Right cardiac atrium (tissue), 5 donors: ENCODE measurements at regions of chr5 and their contacts with region 1.

Region 1: DNA sequence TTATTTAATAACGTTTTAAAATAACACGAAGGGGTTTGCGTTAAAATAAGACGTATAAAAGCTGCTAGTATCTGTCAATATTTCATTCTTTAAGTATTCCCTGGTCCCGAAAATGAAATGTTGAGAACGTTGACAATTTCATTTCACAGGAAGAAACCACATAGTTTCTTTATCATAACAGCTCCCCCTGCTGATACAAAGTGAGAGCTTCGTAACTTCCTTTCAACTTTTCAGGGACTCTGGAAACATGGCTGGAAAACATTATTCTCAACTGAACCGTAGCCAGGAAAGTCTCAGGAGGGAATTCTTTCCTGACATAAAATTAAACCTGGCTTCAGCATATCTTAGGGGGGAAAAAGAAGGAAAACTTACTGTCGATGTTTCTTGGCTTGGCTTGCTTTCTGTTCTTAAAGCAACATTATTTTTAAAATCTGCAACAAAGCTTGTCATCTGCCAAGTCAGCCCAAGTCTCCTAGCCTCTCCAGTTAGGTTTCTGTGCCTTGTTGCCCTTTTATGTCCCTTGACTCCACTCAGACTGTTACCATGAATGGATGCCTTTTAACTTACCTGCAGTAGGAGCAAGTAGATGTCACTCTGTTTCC is 122.9 kb upstream of the DAB2 start:
- DNase-seq: peak in 1 of 3 donors; percentile 23
- ATAC-seq: peak; percentile 72 to 80
- H3K4me3 ChIP-seq: no peak overlapping the region
- H3K27ac ChIP-seq: no peak overlapping the region
- H3K4me1 ChIP-seq: peaks cover 1% of the 10 kb centered on the region
- H3K27me3 ChIP-seq: no peaks in the 10 kb centered on the region

Region 2: GRCh38 chr5:39217365-39218281 is 330.0 kb before region 1 on chr5:
- intact Hi-C with region 1: loop called in 1 of 4 experiments (anchors 10 kb)
- DNase-seq: peak; percentile 71 to 88 (median 72)
- ATAC-seq: peak; percentile 80 to 85
- H3K4me3 ChIP-seq: no peak overlapping the region
- H3K27ac ChIP-seq: no peak overlapping the region
- H3K4me1 ChIP-seq: no peaks in the 10 kb centered on the region
- H3K27me3 ChIP-seq: no peaks in the 10 kb centered on the region

Region 3: DNA sequence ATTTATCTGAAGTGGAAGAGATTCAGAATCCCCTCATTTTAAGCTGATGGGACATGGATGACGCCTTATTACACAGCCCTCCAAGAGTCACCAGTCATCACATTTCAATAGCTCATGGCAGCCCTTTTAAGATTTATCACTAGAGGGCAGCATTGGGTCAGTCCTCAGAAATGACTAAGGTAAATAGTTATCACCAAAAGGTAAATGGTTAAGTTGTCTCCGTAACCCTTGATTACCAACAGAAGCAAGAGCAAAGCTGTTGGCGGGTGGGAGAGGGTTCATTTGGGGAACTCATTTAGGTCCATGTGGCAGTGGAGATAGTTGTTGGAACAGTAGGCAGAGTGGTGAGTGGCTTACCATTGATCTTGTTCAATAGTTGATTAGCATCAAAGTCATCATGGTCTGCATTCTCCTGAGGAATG is 171.3 kb before region 1 on chr5:
- intact Hi-C with region 1: loop called in 3 of 4 experiments (anchors 2 to 5 kb)
- DNase-seq: no peak
- ATAC-seq: peak in 1 of 2 donors; percentile 79
- H3K4me3 ChIP-seq: no peak overlapping the region
- H3K27ac ChIP-seq: no peak overlapping the region
- H3K4me1 ChIP-seq: no peaks in the 10 kb centered on the region
- H3K27me3 ChIP-seq: no peaks in the 10 kb centered on the region

Region 4: GRCh38 chr5:39424736-39425637 is 122.7 kb before region 1 on chr5 and contains the start of gene DAB2:
- intact Hi-C with region 1: loop called in 1 of 4 experiments (anchors 10 kb)
- DNase-seq: peak; percentile 86 to 94 (median 94)
- ATAC-seq: peak; percentile 87 to 89
- H3K4me3 ChIP-seq: peak within 1 kb of the TSS; percentile 76
- H3K27ac ChIP-seq: peak within 1 kb of the TSS; percentile 89
- H3K4me1 ChIP-seq: no peaks in the 10 kb centered on the region
- H3K27me3 ChIP-seq: no peaks in the 10 kb centered on the region
- total RNA-seq, gene DAB2: 21.8 to 27.8 (median 24.6) TPM

Region 5: DNA sequence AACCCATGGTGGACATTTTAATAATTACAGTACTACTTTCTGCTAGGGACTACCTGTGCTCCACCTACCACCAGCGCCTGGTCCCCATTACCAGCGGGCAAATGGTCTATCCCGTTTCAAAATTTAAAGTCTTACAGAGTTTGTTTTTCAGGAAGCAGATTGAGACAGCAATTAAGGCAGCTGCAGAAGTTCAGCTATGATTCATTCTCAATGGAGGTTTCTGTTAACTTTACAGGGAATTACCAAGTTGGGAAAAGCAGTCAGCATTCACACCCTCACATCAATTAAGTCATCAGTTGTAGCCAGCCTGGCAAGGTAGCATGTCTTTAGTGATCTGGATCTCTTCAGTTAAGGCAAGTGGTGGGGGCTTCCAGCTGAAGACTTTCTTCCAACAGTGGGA is 287.7 kb after region 1 on chr5:
- intact Hi-C with region 1: no loop called
- DNase-seq: no peak
- ATAC-seq: no peak
- H3K4me3 ChIP-seq: no peak overlapping the region
- H3K27ac ChIP-seq: no peak overlapping the region
- H3K4me1 ChIP-seq: no peaks in the 10 kb centered on the region
- H3K27me3 ChIP-seq: no peaks in the 10 kb centered on the region